ENCODE measurements at regions of chr1 and their contacts with region 1.

Region 1: DNA sequence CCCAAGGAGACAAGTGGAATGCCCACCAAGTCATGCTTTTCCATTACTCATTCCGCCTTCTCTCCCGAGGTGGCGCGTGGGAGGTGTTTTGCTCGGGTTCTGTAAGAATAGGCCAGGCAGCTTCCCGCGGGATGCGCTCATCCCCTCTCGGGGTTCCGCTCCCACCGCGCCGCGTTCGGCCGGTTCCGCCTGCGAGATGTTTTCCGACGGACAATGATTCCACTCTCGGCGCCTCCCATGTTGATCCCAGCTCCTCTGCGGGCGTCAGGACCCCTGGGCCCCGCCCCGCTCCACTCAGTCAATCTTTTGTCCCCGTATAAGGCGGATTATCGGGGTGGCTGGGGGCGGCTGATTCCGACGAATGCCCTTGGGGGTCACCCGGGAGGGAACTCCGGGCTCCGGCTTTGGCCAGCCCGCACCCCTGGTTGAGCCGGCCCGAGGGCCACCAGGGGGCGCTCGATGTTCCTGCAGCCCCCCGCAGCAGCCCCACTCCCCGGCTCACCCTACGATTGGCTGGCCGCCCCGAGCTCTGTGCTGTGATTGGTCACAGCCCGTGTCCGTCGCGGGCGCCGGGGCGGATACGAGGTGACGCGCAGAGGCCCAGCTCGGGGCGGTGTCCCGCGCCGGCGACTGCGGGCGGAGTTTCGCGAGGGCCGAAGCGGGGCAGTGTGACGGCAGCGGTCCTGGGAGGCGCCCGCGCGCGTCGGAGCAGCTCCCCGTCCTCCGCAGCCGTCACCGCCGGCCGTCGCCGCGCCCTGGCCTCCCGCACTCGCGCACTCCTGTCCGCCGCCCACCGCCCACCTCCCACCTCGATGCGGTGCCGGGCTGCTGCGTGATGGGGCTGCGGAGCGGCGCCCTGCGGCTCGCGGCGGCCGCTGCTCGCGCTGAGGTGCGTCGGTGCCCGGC is at the start of gene KIF1B:
- DNase-seq: peak; percentile 100
- CTCF ChIP-seq: peak; percentile 78

Region 2: GRCh38 chr1:10170239-10170574 is 40.0 kb before region 1 on chr1:
- CTCF ChIA-PET with region 1: interaction called, 14 read pairs
- POLR2A ChIA-PET with region 1: no interaction called
- DNase-seq: peak; percentile 47
- CTCF ChIP-seq: no peak

Region 3: DNA sequence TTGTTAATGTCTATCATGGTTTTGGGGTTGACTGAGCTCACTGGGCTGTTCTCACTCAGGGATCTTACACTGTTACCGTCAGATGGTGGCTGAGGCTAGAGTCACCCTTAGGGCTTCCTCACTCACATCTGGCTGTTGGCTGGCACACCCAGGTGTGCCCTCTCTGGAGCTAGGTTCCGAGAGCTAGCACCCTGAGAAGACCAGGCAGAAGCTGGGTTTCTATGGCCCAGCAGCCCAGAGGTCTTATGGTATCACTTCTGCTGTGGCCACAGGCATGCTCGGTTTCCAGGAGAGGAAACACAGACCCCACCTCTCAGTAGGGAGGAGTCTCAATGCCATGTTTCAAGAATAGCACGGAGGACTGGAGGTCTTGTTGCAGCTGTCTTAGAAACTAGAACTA is 20.5 kb before region 1 on chr1:
- CTCF ChIA-PET with region 1: interaction called, 38 read pairs
- POLR2A ChIA-PET with region 1: no interaction called
- DNase-seq: no peak
- CTCF ChIP-seq: no peak

Region 4: GRCh38 chr1:10236405-10237156 is 26.4 kb after region 1 on chr1:
- CTCF ChIA-PET with region 1: interaction called, 13 read pairs
- POLR2A ChIA-PET with region 1: no interaction called
- DNase-seq: no peak
- CTCF ChIP-seq: no peak

Region 5: DNA sequence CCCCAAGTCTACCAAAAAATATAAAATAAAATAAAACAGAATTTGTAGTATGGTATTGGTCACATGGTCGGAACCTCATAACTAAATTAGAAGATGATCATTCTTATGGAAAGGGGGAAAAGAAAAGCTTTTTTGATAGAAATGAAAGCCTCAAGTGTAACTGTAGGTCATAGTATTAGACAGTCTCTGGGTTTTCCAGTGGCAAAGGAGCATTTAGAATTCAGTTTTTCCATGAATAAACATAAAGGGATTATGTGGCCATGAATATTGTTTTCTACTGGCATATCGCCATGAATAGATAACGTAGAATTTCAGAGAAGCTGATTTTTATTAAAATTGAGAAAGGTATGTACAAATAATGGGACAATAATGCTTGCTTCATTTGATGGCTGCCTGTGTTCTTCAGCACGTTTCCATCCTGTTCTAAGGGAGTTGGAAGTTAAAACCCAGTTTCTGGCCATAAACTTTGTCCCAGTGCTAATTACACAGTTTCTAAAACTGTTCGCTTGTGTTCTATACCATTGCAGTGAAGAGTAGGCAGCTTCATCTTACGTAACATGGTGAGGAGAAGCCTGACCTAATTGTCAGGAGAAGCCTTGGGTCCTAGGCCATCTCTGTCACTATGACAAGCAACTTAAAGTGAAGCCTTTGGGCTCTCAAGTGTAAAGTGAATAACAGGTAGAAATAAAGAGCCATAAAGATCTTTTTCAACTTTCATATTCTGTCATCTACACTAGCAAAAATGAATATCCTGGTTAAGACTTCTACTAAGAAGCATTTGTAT is 118.2 kb after region 1 on chr1:
- CTCF ChIA-PET with region 1: interaction called, 16 read pairs
- POLR2A ChIA-PET with region 1: no interaction called
- DNase-seq: no peak
- CTCF ChIP-seq: no peak

Region 6: DNA sequence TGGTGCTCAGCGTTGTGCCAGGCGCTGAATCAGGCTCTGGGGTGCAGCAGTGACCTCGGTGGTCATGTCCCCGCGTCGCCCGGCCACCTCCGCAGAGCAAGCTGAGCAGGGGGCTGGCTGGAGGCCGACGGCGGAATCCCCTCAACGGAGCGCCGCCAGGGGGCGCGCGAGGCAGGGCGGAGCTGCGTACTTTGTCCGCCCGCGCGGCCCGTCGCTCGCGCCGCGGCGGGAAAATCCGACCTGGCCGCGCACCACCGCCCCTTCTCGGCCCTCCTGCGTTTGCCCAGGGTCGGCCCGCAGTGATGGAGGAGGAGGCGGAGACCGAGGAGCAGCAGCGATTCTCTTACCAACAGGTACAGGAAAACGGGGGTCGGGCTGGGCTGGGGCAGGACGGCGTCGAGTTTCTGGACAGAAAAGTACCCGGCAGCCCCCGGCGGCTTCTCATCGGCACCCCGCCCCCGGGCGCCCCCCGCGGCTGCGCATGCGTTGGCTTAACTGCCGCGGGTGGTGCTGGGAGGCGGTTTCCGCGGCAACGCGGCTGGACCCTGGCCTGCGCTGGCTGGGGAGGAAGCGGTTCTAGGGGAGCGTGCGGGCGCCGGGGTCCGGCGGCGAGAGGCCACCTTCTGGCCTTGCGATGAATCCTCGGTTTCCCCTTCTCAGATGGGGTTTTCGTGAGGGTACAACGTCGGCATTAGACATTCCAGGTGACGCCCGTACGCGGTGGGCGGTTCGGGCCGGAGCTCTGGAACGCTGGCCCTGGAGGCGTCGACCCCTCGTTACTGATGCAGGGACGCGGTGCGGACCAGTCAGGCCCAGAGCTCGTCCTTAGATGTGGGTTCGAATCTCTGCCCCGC is 220.3 kb after region 1 on chr1 and contains the start of gene CENPS:
- CTCF ChIA-PET with region 1: interaction called, 10 read pairs
- POLR2A ChIA-PET with region 1: no interaction called
- DNase-seq: peak; percentile 99
- CTCF ChIP-seq: peak; percentile 88